ENCODE measurements at regions of chr6 and their contacts with region 1.

Region 1: DNA sequence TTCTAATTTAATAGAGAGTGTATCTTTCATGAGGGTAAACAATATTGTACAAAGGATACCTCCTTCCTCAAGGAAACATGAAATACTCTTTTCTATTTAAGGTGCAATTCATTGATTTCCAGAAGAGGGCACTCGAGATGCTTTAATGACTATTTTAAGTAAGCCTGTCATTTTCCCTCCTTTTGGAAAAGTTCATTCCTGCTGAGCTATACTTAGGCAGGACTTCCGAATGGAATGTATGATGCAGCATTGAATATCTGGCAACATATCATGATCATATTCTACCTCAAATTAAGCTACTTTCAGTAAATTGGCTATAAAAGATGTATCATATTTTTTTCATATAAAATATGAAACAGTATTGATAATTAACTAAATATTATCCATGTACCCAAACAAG is 5.0 kb downstream of the DST start:
- DNase-seq: no peak
- ATAC-seq: peak; percentile 69

Region 2: DNA sequence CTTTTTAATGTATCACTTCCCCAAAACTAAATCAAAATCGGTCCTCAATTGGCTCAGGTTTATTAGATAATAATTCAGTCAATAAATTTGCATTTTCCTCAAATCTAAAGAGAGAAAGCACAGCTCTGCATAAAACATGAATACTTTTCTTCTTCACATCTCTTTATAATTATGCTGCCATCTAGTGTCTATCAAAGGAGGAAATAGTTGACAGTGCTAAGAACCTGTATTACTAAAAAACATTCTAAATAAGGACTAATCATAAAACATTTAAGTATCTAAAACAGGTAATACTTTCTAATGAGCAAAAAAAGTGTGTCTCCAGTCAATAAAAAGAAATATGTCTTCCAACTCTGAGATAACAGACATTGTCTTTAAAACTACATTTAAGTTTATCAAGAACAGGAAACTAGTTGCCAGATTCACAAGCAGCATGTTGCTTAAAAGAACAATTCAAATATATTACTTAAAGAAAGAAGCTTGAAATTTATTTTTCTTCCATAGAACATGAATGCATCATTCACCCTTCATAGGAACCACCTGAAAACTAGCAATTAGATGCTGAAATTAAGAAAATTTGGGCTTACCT is 61.5 kb after region 1 on chr6:
- intact Hi-C with region 1: loop called (anchors 5 kb)
- DNase-seq: no peak
- ATAC-seq: peak; percentile 70

Region 3: DNA sequence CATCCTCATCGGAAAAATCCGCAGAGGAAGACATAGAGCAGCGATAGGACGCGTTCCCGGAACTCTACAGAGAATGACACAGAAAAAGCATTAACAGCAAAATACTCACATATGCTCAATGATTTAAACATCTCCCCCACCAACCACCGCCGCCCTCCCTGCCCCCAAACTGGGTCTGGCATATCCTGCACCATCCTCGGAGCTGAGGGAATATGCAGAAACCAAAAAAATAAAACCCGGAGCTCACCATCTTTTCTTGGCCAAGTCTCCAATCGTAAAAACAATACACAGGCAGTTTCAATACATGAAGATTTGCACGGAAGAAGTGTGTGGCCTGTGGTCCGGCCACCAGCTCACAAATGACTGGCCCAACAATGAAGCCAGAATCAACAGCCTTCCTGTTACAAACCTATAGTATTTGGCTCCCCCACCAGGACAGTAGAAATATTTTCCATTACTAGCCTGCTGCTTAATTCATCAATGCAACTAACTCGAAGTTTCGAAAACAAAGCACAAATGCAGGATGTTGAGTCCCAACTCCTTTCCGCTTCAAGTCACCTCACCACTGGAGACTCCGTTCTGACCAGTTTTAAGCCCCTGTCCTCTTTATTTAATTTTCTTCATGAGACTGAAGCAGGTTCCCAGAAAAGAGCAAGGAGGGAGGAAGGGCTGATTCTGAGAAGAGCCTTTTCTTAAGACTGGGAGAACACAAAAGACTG is 214.1 kb after region 1 on chr6:
- intact Hi-C with region 1: loop called (anchors 5 kb)
- DNase-seq: peak; percentile 44
- ATAC-seq: peak; percentile 91